ENCODE measurements at regions of chr15 and their contacts with region 1.

Region 1: DNA sequence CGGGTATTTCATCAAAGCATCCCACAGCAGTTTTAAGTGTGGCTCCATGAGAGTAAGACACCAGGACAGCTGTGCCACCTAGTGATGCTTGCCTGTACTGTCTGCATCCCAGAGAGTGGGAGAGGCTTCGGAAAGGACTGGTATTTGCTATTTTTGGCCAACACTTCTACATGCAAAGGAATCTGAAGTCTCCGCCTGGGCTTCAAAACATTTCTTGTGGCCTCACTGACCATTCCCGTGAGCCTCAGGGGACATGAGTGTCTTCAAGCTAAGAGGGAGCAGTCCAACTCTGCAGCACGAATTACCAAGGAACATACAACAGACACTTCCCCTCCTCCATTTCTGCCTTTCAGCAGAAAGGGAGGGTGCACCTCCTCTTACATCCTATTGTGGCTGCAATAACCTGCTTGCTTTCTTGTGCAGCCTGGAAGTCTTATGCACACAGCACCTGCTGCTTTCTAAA is 177.5 kb downstream of the RORA start:
- H3K4me3 ChIP-seq: no peak overlapping the region
- H3K27ac ChIP-seq: no peak overlapping the region
- H3K4me1 ChIP-seq: no peaks in the 10 kb centered on the region
- CTCF ChIP-seq: peak; percentile 4; the same call in 1 of the 2 replicates

Region 2: DNA sequence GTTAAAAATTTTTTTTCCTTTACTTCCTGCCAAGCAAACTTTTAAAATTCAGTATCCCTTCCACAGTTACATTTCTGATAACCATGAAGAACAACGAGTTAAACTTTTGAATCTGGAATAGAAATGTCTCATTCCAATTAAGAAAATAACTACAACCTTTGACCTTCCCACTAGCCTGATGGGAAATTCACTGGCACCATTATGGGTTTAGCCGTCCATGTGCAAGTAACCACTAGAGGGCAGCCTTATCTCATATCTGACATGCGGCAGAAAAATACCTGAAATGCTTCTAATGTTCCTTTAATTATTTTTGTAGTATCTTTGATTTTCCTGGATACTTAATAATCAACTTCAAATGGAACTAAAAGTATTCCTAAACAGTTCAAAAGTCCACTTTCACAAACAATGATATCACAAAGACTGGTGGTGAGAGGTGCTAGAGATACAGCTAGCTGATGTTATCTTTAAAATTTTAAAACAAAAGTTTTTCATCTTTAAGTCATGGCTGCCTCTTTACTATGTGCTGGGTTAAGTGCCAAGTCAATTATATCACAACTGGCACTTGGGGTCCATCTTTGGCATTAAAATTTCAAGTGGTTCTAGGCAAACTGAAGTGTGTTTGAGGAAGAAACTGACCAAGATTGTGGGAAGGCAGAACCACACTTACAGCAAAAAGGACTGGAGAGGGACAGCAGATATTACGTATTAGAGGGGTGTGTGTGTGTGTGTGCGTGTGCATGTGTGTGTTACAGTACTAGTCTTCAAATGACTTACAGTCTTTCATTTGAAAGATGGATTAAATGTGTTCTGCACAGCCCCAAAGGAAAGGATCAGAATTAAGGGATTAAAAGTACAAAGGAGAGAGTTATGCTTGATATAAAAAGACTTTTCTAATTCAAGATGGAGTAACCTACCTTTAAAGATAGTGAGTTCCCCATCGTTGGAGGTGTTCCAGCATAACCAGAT is 465.6 kb before region 1 on chr15:
- CTCF ChIA-PET with region 1: interaction called, 12 read pairs
- POLR2A ChIA-PET with region 1: no interaction called
- H3K4me3 ChIP-seq: no peak overlapping the region
- H3K27ac ChIP-seq: no peak overlapping the region
- H3K4me1 ChIP-seq: peaks cover 23% of the 10 kb centered on the region
- CTCF ChIP-seq: no peak